ENCODE measurements at regions of chr19 and their contacts with region 1.

Region 1: DNA sequence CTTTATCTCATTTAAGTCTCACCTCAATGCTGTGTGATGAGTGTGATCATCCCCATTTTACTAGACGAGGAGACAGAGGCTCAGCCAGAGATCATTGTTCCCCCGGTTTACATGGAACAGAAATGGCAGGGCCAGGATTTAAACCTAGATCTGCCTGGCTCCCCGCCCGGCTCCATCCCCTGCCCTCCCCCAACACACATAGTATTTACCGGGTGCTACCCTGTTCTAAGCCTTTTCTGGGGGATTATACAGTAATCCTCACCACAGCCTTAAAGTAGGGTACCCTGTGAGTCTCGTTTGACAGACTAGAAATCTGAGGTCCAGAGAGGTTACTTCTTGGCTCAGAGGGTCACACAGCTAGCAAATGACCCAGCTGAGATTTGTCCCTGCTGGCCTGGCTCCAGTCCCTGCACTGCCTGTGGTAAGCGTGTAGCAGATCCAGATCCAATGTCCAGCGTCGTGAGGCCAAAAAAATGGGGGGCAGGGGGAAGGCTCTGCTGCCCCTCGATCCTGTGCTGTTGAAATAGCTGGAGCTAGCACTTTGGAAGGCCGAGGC is 3.8 kb upstream of the KLC3 start:
- DNase-seq: no peak
- ATAC-seq: no peak
- H3K4me3 ChIP-seq: no peak overlapping the region
- H3K27ac ChIP-seq: no peak overlapping the region
- H3K4me1 ChIP-seq: peaks cover 3% of the 10 kb centered on the region; the same call in 1 of the 2 replicates
- H3K27me3 ChIP-seq: 0 out of 4 replicates have a peak, but pooled peaks cover 0 to 1% of the 10 kb centered on the region in 2 experiments
- CTCF ChIP-seq: no peak
- EP300 ChIP-seq: no peak
- POLR2A ChIP-seq: no peak
- RAD21 ChIP-seq: no peak

Region 2: DNA sequence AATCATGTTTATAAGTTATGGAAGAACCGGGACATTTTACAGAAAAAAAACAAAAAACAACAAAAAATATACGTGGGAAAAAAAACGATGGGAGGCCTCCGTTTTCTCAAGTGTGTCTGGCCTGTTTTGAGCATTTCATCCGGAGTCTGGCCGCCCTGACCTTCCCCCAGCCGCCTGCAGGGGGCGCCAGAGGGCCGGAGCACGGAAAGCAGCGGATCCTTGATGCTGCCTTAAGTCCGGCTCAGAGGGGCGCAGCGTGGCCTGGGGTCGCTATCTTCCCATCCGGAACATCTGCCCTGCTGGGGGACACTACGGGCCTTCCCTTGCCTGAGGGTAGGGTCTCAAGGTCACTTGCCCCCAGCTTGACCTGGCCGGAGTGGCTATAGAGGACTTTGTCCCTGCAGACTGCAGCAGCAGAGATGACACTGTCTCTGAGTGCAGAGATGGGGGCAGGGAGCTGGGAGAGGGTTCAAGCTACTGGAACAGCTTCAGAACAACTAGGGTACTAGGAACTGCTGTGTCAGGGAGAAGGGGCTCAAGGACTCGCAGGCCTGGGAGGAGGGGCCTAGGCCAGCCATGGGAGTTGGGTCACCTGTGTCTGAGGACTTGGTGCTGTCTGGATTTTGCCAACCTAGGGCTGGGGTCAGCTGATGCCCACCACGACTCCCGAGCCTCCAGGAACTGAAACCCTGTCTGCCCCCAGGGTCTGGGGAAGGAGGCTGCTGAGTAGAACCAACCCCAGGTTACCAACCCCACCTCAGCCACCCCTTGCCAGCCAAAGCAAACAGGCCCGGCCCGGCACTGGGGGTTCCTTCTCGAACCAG is 433.0 kb before region 1 on chr19:
- CTCF ChIA-PET with region 1: interaction called, 3 read pairs
- POLR2A ChIA-PET with region 1: no interaction called
- RAD21 ChIA-PET with region 1: no interaction called
- SMC1A ChIA-PET with region 1: no interaction called
- in situ Hi-C with region 1: loop called (anchors 10 kb)
- intact Hi-C with region 1: loop called (anchors 5 kb)
- DNase-seq: no peak
- ATAC-seq: peak; percentile 84
- H3K4me3 ChIP-seq: no peak overlapping the region
- H3K27ac ChIP-seq: no peak overlapping the region
- H3K4me1 ChIP-seq: no peaks in the 10 kb centered on the region
- H3K27me3 ChIP-seq: no peaks in the 10 kb centered on the region
- CTCF ChIP-seq: peak; percentile 93 to 99 (median 96)
- EP300 ChIP-seq: no peak
- POLR2A ChIP-seq: peak; percentile 25; the same call in 1 of the 2 replicates
- RAD21 ChIP-seq: peak; percentile 88

Region 3: GRCh38 chr19:45187421-45188100 is 149.2 kb before region 1 on chr19:
- CTCF ChIA-PET with region 1: interaction called, 6 read pairs
- POLR2A ChIA-PET with region 1: no interaction called
- RAD21 ChIA-PET with region 1: no interaction called
- SMC1A ChIA-PET with region 1: interaction called, 3 read pairs
- in situ Hi-C with region 1: no loop called
- intact Hi-C with region 1: loop called (anchors 5 kb)
- DNase-seq: no peak
- ATAC-seq: peak; percentile 90
- H3K4me3 ChIP-seq: no peak overlapping the region
- H3K27ac ChIP-seq: no peak overlapping the region
- H3K4me1 ChIP-seq: peaks cover 3% of the 10 kb centered on the region; the same call in 1 of the 2 replicates
- H3K27me3 ChIP-seq: no peaks in the 10 kb centered on the region
- CTCF ChIP-seq: peak; percentile 67 to 73 (median 69)
- EP300 ChIP-seq: no peak
- POLR2A ChIP-seq: no peak
- RAD21 ChIP-seq: peak; percentile 78

Region 4: GRCh38 chr19:45250832-45251451 is 85.8 kb before region 1 on chr19 and contains the start of gene MARK4:
- CTCF ChIA-PET with region 1: interaction called, 15 read pairs
- POLR2A ChIA-PET with region 1: no interaction called
- RAD21 ChIA-PET with region 1: interaction called, 3 read pairs
- SMC1A ChIA-PET with region 1: interaction called, 4 read pairs
- in situ Hi-C with region 1: no loop called
- intact Hi-C with region 1: loop called (anchors 5 kb)
- DNase-seq: no peak
- ATAC-seq: peak; percentile 71
- H3K4me3 ChIP-seq: peak within 1 kb of the TSS; percentile 98
- H3K27ac ChIP-seq: peak within 1 kb of the TSS; percentile 53
- H3K4me1 ChIP-seq: peaks cover 15% of the 10 kb centered on the region
- H3K27me3 ChIP-seq: no peaks in the 10 kb centered on the region
- CTCF ChIP-seq: no peak
- EP300 ChIP-seq: no peak
- POLR2A ChIP-seq: peak; percentile 69
- RAD21 ChIP-seq: no peak
- polyA plus RNA-seq, gene MARK4: 0.66 TPM

Region 5: GRCh38 chr19:45363861-45364459 is 27.2 kb after region 1 on chr19:
- CTCF ChIA-PET with region 1: no interaction called
- POLR2A ChIA-PET with region 1: no interaction called
- RAD21 ChIA-PET with region 1: no interaction called
- SMC1A ChIA-PET with region 1: no interaction called
- in situ Hi-C with region 1: no loop called
- intact Hi-C with region 1: no loop called
- DNase-seq: no peak
- ATAC-seq: no peak
- H3K4me3 ChIP-seq: no peak overlapping the region
- H3K27ac ChIP-seq: no peak overlapping the region
- H3K4me1 ChIP-seq: no peaks in the 10 kb centered on the region; the same call in 1 of the 2 replicates
- H3K27me3 ChIP-seq: no peaks in the 10 kb centered on the region
- CTCF ChIP-seq: no peak
- EP300 ChIP-seq: no peak
- POLR2A ChIP-seq: no peak
- RAD21 ChIP-seq: no peak